ENCODE measurements at regions of chr18 and their contacts with region 1.

Region 1: DNA sequence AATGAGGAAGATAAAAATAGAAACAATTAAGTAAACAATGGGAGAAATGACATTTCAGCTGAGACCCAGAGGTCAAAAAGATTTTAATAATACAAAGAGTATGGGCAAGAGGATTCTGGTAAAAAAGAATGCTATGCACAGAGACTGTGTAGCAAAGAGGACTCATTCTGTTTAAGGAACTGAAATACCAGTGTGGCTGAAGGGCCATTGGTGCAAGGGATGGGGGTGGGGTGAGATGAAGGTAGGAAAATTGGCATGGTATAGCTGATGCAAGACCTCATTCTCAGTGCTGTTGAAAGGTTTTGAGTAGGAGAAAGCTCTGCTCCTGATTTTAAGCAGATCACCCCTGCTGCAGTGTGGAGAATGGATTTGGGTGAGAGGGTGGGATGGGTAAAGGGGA is 10.8 kb downstream of the GALNT1 start:
- DNase-seq: peak; percentile 65
- ATAC-seq: peak; percentile 97
- H3K4me3 ChIP-seq: no peak overlapping the region
- H3K4me3 Mint-ChIP-seq: no peak overlapping the region
- H3K27ac ChIP-seq: peak overlapping the region in 1 of 2 donors; percentile 47
- H3K27ac Mint-ChIP-seq: no peak overlapping the region
- H3K4me1 ChIP-seq: peaks cover 54 to 55% of the 10 kb centered on the region in 2 donors
- H3K4me1 Mint-ChIP-seq: peaks cover 40% of the 10 kb centered on the region
- H3K27me3 ChIP-seq: no peaks in the 10 kb centered on the region
- H3K27me3 Mint-ChIP-seq: no peaks in the 10 kb centered on the region
- CTCF ChIP-seq: no peak

Region 2: DNA sequence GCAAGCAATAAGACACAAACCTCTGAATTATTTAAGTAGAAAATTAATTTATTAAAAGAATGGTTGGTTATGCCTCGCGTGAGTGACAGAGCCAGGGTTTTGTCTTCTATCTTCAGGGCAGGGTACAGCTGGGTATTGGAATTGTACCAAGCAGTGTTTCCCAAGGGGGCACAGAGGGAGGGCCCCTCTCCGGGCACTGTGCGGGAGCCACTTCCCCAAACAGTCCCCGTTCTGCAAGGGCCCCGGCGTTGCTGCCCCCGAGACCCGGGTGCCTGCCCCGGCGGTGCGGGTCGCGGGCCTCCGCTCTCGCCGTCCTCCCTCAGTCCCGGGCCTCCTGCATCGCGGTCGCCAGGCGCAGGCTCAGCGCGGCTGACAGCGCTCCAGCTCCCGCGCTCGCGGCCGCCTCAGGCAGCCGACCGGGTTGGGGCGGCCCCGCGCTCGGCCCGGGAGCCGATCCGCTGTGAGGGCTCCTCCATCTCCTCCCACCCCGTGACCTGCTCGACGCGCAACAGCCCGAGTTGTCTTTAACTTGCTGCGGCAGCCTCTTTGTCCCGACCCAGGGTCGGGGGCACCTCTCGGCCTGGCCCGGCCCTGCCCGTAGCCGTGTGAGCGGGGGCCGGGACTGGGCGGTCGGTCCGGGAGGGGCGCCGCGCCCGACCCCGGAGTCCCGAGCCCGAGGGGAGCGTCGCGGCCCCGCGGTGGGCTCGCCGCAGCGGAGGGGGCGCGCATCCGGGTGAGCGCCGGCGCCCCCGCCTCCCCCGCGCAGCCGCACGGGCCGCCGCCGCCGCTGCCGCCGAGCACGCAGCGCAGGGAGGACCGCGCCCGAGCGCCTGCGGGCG is 11.4 kb before region 1 on chr18:
- CTCF ChIA-PET with region 1: interaction called, 6 read pairs
- POLR2A ChIA-PET with region 1: interaction called, 5 read pairs
- intact Hi-C with region 1: loop called (anchors 1 kb)
- DNase-seq: peak; percentile 88
- ATAC-seq: peak; percentile 65
- H3K4me3 ChIP-seq: peak overlapping the region; percentile 30 to 78 (median 65)
- H3K4me3 Mint-ChIP-seq: peak overlapping the region; percentile 84
- H3K27ac ChIP-seq: peak overlapping the region; percentile 69 to 86
- H3K27ac Mint-ChIP-seq: peak overlapping the region; percentile 88
- H3K4me1 ChIP-seq: peaks cover 15 to 16% of the 10 kb centered on the region in 2 donors
- H3K4me1 Mint-ChIP-seq: peaks cover 33% of the 10 kb centered on the region
- H3K27me3 ChIP-seq: no peaks in the 10 kb centered on the region
- H3K27me3 Mint-ChIP-seq: no peaks in the 10 kb centered on the region
- CTCF ChIP-seq: no peak

Region 3: GRCh38 chr18:35616664-35617423 is 24.5 kb after region 1 on chr18:
- CTCF ChIA-PET with region 1: interaction called, 12 read pairs
- POLR2A ChIA-PET with region 1: interaction called, 6 read pairs
- intact Hi-C with region 1: loop called (anchors 1 kb)
- DNase-seq: peak; percentile 85
- ATAC-seq: peak; percentile 95
- H3K4me3 ChIP-seq: peak overlapping the region in 3 of 5 experiments; percentile 0 to 5 (median 1)
- H3K4me3 Mint-ChIP-seq: no peak overlapping the region
- H3K27ac ChIP-seq: peak overlapping the region; percentile 54 to 89
- H3K27ac Mint-ChIP-seq: no peak overlapping the region
- H3K4me1 ChIP-seq: peaks cover 20 to 26% of the 10 kb centered on the region in 2 donors
- H3K4me1 Mint-ChIP-seq: peaks cover 23% of the 10 kb centered on the region
- H3K27me3 ChIP-seq: no peaks in the 10 kb centered on the region
- H3K27me3 Mint-ChIP-seq: no peaks in the 10 kb centered on the region
- CTCF ChIP-seq: no peak

Region 4: DNA sequence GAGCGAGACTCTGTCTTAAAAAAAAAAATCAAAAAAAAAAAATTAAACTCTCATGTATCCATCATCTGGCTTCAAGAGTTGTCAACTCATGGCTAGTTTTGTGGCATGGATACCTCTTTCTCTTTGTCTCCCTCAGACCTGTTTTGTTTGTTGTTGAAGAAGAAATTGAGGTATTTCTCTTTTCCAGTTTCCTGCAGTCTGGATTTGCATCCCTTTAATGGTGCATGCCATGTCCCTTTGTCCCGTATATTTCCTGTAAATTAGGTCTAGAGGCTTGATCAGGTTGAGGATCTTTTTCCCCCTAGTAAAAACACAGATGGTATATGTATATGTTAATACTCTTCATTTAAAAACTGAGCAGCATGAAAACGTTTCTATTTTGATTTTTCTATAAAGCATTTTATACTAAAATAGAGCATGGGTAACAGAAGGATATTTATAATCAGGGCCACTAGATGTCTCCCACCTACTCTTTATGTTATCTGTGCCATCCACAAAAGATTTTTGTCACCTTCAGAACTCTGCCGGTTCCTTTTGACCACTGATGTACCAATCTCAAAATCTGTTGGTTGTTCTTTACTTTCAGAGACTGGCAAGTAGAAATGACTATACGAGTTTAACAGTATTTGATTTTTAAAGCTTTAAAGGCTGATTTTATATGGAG is 69.3 kb after region 1 on chr18:
- CTCF ChIA-PET with region 1: no interaction called
- POLR2A ChIA-PET with region 1: no interaction called
- intact Hi-C with region 1: loop called (anchors 5 kb)
- DNase-seq: no peak
- ATAC-seq: no peak
- H3K4me3 ChIP-seq: no peak overlapping the region
- H3K4me3 Mint-ChIP-seq: no peak overlapping the region
- H3K27ac ChIP-seq: no peak overlapping the region
- H3K27ac Mint-ChIP-seq: no peak overlapping the region
- H3K4me1 ChIP-seq: peaks cover 5 to 12% of the 10 kb centered on the region in 2 donors
- H3K4me1 Mint-ChIP-seq: peaks cover 20% of the 10 kb centered on the region
- H3K27me3 ChIP-seq: no peaks in the 10 kb centered on the region
- H3K27me3 Mint-ChIP-seq: no peaks in the 10 kb centered on the region
- CTCF ChIP-seq: no peak

Region 5: GRCh38 chr18:35756506-35757117 is 164.3 kb after region 1 on chr18:
- CTCF ChIA-PET with region 1: interaction called, 12 read pairs
- POLR2A ChIA-PET with region 1: no interaction called
- intact Hi-C with region 1: loop called (anchors 2 kb)
- DNase-seq: peak; percentile 75
- ATAC-seq: peak; percentile 63
- H3K4me3 ChIP-seq: no peak overlapping the region
- H3K4me3 Mint-ChIP-seq: no peak overlapping the region
- H3K27ac ChIP-seq: no peak overlapping the region
- H3K27ac Mint-ChIP-seq: no peak overlapping the region
- H3K4me1 ChIP-seq: no peaks in the 10 kb centered on the region
- H3K4me1 Mint-ChIP-seq: peaks cover 2% of the 10 kb centered on the region
- H3K27me3 ChIP-seq: peaks cover 0 to 11% (median 6%) of the 10 kb centered on the region in 4 experiments
- H3K27me3 Mint-ChIP-seq: peaks cover 27% of the 10 kb centered on the region
- CTCF ChIP-seq: peak; percentile 99

Region 6: DNA sequence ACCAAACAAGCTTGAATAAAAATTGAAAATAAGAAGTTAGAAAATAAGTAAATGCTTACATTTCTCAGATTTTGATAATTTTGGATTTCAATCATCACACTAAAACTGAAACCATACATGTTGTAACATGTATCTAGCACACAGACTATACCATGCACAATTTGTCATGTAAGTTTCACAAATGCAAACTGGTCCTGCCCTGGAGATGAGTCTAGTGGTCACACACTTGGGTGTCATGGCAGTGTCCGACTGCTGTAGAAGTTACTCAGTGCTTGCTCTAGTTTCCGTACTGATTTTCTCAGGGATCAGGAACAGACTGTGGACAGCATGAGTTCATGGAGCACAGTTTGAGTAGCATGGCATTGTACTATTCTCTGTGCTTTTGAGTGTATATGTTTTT is 197.2 kb after region 1 on chr18:
- CTCF ChIA-PET with region 1: no interaction called
- POLR2A ChIA-PET with region 1: no interaction called
- intact Hi-C with region 1: no loop called
- DNase-seq: no peak
- ATAC-seq: no peak
- H3K4me3 ChIP-seq: no peak overlapping the region
- H3K4me3 Mint-ChIP-seq: no peak overlapping the region
- H3K27ac ChIP-seq: no peak overlapping the region
- H3K27ac Mint-ChIP-seq: no peak overlapping the region
- H3K4me1 ChIP-seq: peaks cover 15 to 16% of the 10 kb centered on the region in 2 donors
- H3K4me1 Mint-ChIP-seq: peaks cover 19% of the 10 kb centered on the region
- H3K27me3 ChIP-seq: peaks cover 0 to 12% (median 4%) of the 10 kb centered on the region in 4 experiments
- H3K27me3 Mint-ChIP-seq: peaks cover 15% of the 10 kb centered on the region
- CTCF ChIP-seq: no peak

Region 7: DNA sequence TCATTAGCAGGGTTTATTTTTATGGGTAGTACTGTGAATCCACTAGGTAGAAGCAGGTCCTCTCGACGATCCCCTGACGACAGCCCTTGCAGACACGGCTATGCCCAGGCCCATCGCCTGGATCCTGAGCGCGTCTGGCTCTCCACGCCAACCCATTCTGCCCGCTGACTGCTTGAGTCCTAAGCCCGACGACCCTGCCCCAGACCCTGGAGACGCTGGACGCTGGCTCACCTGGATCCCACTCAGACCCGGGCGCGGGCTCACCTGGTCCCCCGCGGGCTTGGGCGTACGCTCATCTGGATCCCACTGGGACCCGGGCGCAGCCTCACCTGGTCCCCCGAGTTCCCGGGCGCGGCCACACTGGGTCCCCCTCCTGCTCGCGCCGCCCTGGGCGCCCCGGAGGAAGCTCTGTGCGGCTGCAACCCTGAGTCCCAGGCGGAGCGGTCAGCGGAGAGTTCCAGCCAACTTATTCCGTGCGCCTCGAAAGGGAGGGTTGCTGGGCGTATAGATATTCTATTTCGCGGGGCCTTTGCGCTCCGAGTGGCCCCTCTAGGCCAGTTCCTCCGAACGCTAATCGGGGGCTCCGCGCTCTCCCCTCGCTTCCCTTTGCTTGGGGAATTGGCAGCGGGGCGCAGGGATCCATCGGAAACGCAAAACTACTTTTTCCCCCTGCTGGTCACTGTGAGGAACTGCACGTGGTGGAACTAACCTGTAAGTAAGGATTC is 357.8 kb after region 1 on chr18:
- CTCF ChIA-PET with region 1: interaction called, 10 read pairs
- POLR2A ChIA-PET with region 1: no interaction called
- intact Hi-C with region 1: loop called (anchors 1 kb)
- DNase-seq: peak; percentile 77
- ATAC-seq: peak; percentile 86
- H3K4me3 ChIP-seq: peak overlapping the region; percentile 11 to 56 (median 49)
- H3K4me3 Mint-ChIP-seq: peak overlapping the region; percentile 81
- H3K27ac ChIP-seq: no peak overlapping the region
- H3K27ac Mint-ChIP-seq: no peak overlapping the region
- H3K4me1 ChIP-seq: peaks cover 7 to 8% of the 10 kb centered on the region in 2 donors
- H3K4me1 Mint-ChIP-seq: peaks cover 10% of the 10 kb centered on the region
- H3K27me3 ChIP-seq: peaks cover 0 to 10% (median 7%) of the 10 kb centered on the region in 4 experiments
- H3K27me3 Mint-ChIP-seq: peaks cover 32% of the 10 kb centered on the region
- CTCF ChIP-seq: peak; percentile 99

Region 8: DNA sequence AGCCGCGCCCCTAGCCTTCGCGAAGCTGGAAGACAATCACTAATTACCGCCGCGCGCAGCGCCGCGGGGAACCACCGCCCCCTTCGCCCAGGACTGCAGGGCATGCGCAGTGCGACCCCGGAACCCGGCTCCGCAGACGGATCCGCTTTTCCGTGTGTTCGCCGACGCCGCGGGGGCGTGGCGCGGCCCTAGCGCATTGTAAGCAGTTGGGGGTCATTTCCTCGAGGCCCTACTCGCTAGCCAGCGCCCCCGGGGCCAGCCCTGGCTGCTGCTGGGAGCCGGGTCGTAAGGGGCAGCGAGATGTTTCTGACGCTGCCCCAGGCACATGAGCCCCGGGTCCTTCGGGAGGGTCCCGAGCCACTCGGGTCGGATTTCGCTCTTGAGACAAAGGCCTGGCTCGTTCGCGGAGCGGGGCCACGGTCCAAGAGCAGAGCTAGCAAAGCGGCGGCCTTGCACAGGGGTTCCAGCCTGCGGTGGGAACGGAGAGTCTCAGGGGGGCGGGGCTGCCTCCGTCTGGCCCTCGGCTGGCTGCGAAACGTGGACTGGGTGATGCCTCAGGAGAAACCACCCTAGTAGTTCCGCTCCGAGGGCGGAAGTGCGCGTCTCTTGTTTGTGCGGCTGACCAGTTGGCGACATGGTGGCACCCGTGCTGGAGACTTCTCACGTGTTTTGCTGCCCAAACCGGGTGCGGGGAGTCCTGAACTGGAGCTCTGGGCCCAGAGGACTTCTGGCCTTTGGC is 537.2 kb after region 1 on chr18 and contains the starts of genes ELP2 and SLC39A6:
- CTCF ChIA-PET with region 1: no interaction called
- POLR2A ChIA-PET with region 1: no interaction called
- intact Hi-C with region 1: loop called (anchors 2 kb)
- DNase-seq: peak; percentile 97
- ATAC-seq: peak; percentile 85
- H3K4me3 ChIP-seq: peak within 1 kb of the TSS; percentile 82 to 98 (median 90)
- H3K4me3 Mint-ChIP-seq: peak within 1 kb of the TSS; percentile 94
- H3K27ac ChIP-seq: peak within 1 kb of the TSS; percentile 97 to 99
- H3K27ac Mint-ChIP-seq: peak within 1 kb of the TSS; percentile 98
- H3K4me1 ChIP-seq: peaks cover 34 to 36% of the 10 kb centered on the region in 2 donors
- H3K4me1 Mint-ChIP-seq: peaks cover 53% of the 10 kb centered on the region
- H3K27me3 ChIP-seq: no peaks in the 10 kb centered on the region
- H3K27me3 Mint-ChIP-seq: no peaks in the 10 kb centered on the region
- CTCF ChIP-seq: no peak
- total RNA-seq, gene ELP2: 137 and 169 TPM in 2 replicates
- total RNA-seq, gene SLC39A6: 18.2 and 19.5 TPM in 2 replicates

Measured in B cell (primary cell).